Left cardiac atrium (tissue), 4 donors: ENCODE measurements at regions of chr6 and their contacts with region 1.

Region 1: DNA sequence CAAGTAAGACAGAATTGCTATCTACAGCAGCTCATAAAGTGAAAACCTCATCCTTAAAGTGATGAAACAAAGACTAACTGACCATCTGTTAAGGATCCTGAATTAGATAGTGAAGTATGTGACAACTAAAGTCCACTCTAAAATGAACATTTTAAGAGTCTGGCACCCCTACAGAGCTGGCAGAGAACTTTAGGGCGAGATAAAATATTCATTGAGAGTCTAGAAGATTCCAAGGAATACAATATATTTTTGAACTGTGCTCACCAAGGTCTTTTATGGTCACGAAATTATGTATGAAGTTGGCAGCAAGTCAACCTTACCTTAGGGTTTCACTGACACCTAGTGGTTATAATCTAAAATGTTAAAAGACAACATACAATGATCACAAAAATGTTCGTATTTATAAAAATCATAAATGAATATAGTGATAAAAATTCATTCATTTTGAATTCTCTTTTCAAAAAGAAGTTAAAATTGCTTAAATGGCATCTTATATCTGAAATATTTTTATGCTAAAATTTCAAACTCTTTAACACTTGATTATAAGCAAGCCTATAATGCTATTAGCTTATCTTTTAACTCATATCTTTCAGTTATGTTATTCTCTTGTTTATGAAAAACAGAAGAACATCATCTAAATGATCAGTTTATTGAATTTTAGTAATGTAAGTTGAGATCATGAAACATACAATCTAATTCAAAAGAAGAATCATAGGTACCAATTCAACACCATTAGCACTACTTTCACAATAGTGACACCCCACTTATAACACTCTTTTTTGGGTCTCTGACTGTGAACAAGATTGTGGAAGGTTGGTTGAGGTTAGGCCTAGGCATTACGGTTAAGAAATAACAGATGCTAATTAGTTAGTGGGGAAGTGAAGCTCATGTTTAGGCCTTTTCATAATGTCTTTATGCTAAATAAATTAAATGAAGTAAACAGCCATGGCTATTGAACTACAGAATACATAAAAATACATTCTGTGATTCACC is 27.5 kb downstream of the RSPH3 start:
- DNase-seq: no peak
- ATAC-seq: peak; percentile 39 to 57

Region 2: GRCh38 chr6:158706096-158706982 is 266.2 kb before region 1 on chr6:
- intact Hi-C with region 1: loop called (anchors 2 to 10 kb)
- DNase-seq: peak; percentile 75
- ATAC-seq: peak; percentile 29 to 61

Region 3: GRCh38 chr6:158718461-158719046 is 254.0 kb before region 1 on chr6:
- intact Hi-C with region 1: loop called in 1 of 2 experiments (anchors 10 kb)
- DNase-seq: no peak
- ATAC-seq: peak; percentile 39 to 59

Region 4: GRCh38 chr6:158793432-158793831 is 179.1 kb before region 1 on chr6:
- intact Hi-C with region 1: loop called in 1 of 2 experiments (anchors 5 kb)
- DNase-seq: no peak
- ATAC-seq: peak in 1 of 2 donors; percentile 23

Region 5: GRCh38 chr6:158910484-158911348 is 61.8 kb before region 1 on chr6:
- intact Hi-C with region 1: no loop called
- DNase-seq: no peak
- ATAC-seq: no peak

Region 6: GRCh38 chr6:159042003-159042825 is 69.7 kb after region 1 on chr6:
- intact Hi-C with region 1: no loop called
- DNase-seq: peak; percentile 44
- ATAC-seq: peak; percentile 75 to 76